AG04449 (cell line): ENCODE measurements at regions of chr11 and their contacts with region 1.

Region 1: DNA sequence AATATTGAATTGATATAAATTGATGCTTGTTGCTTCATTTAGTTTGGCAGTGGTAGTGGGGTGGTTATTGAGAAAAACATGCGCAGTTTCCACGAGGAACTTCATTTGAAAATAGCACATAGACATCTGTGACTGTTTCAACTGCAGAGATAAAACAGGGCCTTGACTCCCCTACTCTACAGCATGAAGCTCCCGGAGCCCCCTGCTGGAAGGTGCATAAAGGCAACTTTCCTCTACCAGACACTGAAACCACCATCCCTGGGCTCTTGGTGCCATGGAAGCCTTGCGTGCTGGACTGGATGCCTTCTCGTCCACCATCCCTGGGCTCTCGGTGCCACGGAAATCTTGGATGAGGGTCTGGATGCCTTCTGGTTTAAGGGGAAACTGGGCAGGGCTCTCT is 195.9 kb downstream of the CSNK2A3 start:
- DNase-seq: no peak
- H3K4me3 ChIP-seq: no peak overlapping the region
- CTCF ChIP-seq: peak; percentile 59

Region 2: DNA sequence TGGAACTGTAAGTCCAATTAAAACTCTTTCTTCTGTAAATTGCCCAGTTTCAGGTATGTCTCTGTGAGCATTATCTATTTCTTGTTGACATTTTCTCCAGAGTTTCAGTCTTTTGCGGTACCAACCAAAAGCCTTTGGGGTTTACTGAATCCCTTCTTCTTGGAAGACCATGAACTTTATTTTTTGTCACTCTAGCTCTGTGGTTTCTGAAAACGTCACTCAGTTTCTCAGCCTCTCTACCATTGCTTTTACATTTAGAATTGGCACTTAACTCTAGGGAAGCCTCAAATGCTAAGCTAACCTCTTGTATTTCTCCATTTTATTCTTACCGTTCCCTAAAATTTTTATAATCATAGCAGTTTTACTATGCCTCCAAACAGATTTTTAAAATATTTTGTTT is 41.7 kb before region 1 on chr11:
- CTCF ChIA-PET with region 1: no interaction called
- POLR2A ChIA-PET with region 1: no interaction called
- DNase-seq: no peak
- H3K4me3 ChIP-seq: no peak overlapping the region
- CTCF ChIP-seq: no peak

Region 3: DNA sequence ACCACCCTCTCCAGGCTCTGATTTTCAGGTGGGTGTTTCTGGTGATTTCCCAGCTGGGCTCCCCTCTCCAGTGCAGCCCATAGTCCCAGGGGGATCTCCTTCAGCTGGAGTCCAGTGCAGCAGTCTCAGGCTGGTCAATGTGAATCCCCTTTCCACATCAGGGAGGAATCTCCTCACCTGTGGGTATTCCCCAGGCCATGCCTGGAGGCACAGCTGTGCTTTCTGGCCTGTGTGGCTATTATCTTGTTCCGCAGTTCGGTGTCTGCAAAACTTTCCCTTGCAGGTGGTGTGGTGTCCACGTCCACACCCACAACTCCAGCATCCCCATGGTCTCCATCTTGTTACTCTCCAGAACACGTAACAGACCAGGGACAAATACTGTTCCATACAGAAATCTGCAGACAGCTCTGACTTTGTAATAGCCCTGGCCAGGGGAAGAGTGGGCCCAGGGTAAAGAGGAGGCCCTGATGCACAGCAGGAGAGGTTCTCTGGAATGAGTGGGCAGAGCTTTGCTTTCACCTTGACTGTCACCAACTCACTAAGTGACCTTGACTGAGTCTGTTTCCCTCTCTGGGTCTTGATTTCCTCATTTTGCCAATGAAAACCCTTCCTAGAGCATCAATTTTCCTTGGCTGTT is 12.6 kb after region 1 on chr11:
- CTCF ChIA-PET with region 1: interaction called, 30 read pairs
- POLR2A ChIA-PET with region 1: no interaction called
- DNase-seq: no peak
- H3K4me3 ChIP-seq: no peak overlapping the region
- CTCF ChIP-seq: no peak

Region 4: DNA sequence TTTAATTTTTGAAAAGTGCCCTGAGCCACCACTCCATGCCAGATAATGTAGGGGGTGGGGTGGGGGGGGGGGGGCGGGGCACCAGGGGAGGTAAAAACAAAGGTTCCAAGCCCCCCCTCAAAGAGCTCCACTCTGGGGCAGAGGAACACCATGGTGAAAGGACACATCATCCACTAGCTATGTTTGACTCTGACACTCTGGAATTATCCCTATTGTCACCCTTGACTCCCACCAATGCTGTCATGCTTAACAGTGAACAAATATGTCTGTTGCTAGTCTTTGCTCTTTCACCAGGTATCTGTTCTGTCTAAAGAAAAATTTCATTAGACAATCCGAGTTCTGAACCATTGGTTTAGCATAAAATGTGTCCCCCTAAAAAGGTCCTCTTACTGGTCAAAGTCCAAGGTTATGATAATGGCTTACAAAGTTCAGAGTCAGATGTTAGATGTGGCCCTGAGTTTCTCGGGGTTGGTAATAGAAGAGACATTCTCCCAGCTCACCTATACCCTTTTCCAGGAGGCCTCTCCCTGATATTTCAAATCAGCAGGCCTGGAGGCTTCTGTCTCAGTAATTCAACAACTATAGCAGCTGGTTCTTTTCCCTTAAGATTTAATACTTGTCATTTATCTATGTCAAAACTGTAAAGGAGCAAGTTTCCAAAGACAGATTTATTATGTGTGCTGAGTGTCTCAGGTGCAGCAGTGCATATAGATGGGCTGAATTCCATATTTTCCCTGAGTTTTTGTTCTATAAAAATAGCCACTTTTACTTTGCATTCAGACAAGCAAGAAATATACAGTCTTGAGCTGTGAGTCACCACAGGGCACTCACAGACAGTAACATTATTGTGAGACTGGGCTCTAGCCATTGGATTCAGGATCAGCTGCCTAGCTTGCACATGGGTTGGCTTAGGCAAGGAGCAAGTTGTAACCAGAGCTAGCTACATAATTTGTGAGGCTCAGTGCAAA is 21.8 kb after region 1 on chr11:
- CTCF ChIA-PET with region 1: interaction called, 30 read pairs
- POLR2A ChIA-PET with region 1: no interaction called
- DNase-seq: peak; percentile 65
- H3K4me3 ChIP-seq: no peak overlapping the region
- CTCF ChIP-seq: no peak

Region 5: DNA sequence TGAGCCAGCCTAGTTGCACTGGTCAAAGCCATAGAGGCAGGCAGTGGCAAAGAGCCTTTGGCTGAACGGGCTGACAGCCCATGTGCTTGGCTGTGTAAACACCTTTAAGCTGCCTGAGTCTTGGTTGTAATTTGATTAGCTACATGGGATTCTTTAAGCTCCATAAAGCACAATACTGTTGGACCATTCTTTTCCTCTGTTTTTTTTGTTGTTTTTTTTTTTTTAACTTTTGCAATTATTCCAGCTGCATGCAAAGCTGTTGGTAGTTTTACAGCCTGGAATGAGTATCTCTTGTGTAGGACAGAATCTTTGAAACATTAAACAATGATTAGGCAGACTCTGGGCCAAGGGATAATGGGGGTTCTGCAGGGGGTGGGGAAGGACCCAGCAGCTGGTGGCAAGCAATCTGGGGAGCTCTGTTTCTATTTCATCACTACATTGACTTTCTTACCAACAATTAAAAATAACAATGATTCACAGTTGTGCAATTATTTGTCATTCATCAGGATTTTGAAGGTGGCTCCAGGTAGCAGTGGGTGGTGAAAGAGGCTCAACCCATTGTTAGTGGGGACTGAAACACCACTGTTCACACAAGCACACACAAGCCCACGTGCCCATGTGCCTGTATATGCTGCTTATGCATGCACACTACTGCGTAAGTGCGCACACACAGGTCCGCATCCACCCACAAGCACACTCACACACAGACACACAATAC is 265.4 kb after region 1 on chr11:
- CTCF ChIA-PET with region 1: no interaction called
- POLR2A ChIA-PET with region 1: no interaction called
- DNase-seq: no peak
- H3K4me3 ChIP-seq: no peak overlapping the region
- CTCF ChIP-seq: no peak